Head of caudate nucleus (tissue), 42 donors: ENCODE measurements at regions of chr5 and their contacts with region 1.

Region 1: GRCh38 chr5:1641560-1642166 is 117.9 kb upstream of the LPCAT1 start:
- DNase-seq: peak; percentile 69 to 96 (median 87)

Region 2: GRCh38 chr5:1167728-1168709 is 473.6 kb before region 1 on chr5:
- intact Hi-C with region 1: loop called (anchors 10 kb)
- DNase-seq: peak; percentile 47 to 92 (median 81)

Region 3: GRCh38 chr5:1344975-1345838 is 296.5 kb before region 1 on chr5 and contains the start of gene CLPTM1L:
- intact Hi-C with region 1: loop called (anchors 10 kb)
- DNase-seq: peak; percentile 45 to 93 (median 84)

Region 4: DNA sequence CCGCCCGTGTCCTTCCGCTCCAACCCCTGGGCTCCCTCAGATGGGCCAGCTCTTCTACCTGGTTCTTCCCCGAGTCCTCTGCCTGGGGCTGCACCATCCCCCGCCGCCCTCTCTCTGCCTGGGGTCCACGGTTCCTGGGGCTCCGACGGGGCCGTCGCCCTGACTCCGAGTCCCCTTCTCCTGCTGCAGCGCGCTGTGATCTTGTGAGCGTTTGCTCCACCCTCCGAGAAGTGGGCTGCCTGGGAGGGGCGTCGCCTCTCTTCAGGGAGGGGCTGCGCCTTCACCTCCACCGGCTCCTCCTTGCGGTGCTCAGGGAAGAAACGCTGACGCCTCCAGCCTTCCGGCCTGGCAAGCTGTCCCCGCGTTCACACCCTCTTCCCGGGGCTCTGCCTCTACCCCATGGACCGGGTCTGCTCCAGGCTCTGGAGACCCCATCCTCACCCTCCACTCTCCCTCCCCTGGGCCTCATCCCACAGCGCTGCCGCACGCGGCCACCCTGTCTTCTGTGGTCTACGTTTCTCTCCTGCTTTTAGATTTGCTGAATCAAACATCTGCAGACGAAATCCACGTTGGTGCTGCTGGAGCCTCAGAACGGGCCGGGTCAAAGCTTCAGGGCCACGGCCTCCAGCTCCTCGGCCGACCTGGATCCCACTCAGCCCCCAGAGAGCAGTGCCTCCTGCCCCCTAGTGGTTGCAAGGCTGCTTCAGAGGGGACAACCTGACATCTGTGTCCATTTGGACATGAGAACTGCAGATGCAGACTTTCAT is 173.7 kb before region 1 on chr5:
- intact Hi-C with region 1: no loop called
- DNase-seq: peak in 36 of 42 donors; percentile 21 to 81 (median 50)

Region 5: GRCh38 chr5:1702318-1702717 is 60.7 kb after region 1 on chr5:
- intact Hi-C with region 1: no loop called
- DNase-seq: peak in 1 of 42 donors; percentile 29